ENCODE measurements at regions of chrX and their contacts with region 1.

Region 1: GRCh38 chrX:79146640-79147390 is 2.3 kb downstream of the GPR174 start:
- DNase-seq: peak; percentile 45
- H3K4me3 ChIP-seq: peak overlapping the region; percentile 56
- H3K27ac ChIP-seq: peak overlapping the region; percentile 77
- H3K4me1 ChIP-seq: peaks cover 14% of the 10 kb centered on the region
- H3K27me3 ChIP-seq: no peaks in the 10 kb centered on the region
- CTCF ChIP-seq: no peak

Region 2: DNA sequence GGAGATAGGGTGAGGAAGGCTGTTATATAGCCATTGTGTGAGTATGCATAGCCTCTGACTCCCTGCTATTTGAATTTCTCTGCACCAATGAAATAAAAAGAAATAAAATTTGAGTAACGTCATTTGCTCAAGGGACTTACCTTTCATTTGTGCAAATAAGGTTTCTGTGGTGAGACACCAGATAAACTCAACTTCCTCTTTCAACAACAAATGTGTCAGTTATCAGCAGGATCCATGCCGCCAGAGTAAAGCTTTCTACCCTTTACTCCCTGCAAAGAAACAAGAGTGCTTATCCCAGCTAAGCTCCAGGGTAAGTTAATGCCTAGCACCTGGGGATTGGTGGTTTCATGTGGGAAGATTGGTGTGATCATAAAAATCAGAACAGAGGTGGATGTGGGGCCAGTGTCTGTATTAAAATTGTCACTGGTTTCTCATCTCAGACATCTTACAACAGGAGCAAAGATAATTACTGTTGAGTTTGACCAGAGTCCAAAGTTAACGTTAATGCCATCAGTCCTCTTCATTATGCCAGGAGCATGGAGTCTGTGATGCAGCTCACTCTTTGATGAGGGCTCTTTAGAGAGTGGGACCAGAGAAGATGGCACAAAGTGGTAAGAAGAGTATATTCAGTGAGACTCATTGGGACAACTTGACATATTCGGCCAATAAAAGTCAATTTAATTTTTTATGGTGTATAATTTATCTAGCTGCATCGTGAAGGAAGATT is 201.5 kb before region 1 on chrX and contains the start of gene P2RY10:
- CTCF ChIA-PET with region 1: no interaction called
- POLR2A ChIA-PET with region 1: no interaction called
- intact Hi-C with region 1: no loop called
- DNase-seq: no peak
- H3K4me3 ChIP-seq: no peak within 1 kb of the TSS
- H3K27ac ChIP-seq: no peak within 1 kb of the TSS
- H3K4me1 ChIP-seq: no peaks in the 10 kb centered on the region
- H3K27me3 ChIP-seq: no peaks in the 10 kb centered on the region
- CTCF ChIP-seq: no peak
- total RNA-seq, gene P2RY10: not detected in 2 replicates

Region 3: DNA sequence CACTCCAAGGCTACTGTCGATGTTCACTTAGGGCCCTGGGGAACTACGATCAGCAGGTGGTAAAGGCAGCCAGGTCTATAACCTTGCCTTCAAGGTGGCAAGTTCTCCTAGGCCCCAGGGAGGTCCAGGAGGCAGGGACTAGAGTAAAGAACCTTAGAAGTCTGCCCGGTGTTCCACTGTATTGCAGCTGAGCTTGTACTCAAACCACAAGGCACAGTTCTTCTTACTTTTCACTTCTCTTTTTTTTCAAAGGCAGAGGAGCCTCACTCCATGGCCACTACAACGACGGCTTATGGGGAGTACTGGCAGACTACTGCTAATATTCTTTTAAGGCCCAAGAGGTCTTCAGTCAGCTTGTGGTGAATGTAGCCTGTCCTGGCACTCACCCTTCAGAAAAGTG is 81.1 kb before region 1 on chrX:
- CTCF ChIA-PET with region 1: no interaction called
- POLR2A ChIA-PET with region 1: no interaction called
- intact Hi-C with region 1: no loop called
- DNase-seq: no peak
- H3K4me3 ChIP-seq: no peak overlapping the region
- H3K27ac ChIP-seq: no peak overlapping the region
- H3K4me1 ChIP-seq: no peaks in the 10 kb centered on the region
- H3K27me3 ChIP-seq: no peaks in the 10 kb centered on the region
- CTCF ChIP-seq: no peak

Region 4: GRCh38 chrX:79336869-79337815 is 190.3 kb after region 1 on chrX:
- CTCF ChIA-PET with region 1: no interaction called
- POLR2A ChIA-PET with region 1: no interaction called
- intact Hi-C with region 1: loop called (anchors 10 kb)
- DNase-seq: peak; percentile 71
- H3K4me3 ChIP-seq: peak overlapping the region; percentile 29
- H3K27ac ChIP-seq: peak overlapping the region; percentile 88
- H3K4me1 ChIP-seq: peaks cover 12% of the 10 kb centered on the region
- H3K27me3 ChIP-seq: no peaks in the 10 kb centered on the region
- CTCF ChIP-seq: no peak

Measured in A673 (cell line).